Natural killer cell (primary cell): ENCODE measurements at regions of chr4 and their contacts with region 1.

Region 1: DNA sequence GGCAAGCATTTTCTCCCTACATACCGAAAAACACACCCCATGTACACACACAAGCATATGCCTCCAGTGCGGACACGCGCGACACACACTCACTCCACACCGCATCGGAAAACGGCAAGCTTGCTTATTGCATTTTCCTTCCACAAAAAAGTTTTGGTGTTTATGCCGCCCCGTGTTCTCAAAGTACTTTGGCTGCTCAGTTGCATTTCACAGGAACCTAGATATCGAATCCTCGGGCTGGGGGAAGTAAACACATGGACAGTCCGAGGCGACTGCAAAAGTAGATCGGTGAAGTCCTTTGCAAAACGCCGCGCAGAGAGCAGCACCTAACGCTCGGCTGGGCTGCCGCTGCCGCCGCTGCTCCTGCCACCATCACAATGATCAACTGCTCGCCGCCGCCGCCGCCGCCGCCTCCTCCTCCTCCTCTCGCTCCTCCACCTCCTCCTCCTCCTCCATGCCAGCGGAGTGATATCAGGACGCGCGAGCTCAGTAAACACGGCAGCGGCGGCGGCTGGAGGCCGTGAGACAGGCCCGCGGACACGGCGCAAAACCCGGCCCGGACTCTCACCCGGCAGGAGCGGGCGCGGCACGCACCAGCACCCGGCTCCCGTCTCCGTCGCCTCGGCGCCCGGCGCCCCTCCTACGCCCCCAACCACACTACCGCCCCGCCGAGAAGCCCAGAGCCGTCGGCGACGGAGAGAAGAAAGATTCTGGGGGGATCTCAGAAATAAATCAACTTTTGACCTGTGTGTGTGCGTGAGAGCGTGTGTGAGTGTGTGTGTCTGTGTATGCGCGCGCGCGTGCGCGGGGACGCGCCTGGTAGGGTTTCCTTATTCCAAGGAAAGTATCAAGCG is at the start of gene MAML3:
- DNase-seq: peak; percentile 79 to 86
- ATAC-seq: peak; percentile 64 to 70 (median 64)
- H3K4me3 ChIP-seq: peak within 1 kb of the TSS; percentile 79
- H3K4me3 Mint-ChIP-seq: peak within 1 kb of the TSS; percentile 93
- H3K27ac ChIP-seq: peak within 1 kb of the TSS; percentile 59
- H3K27ac Mint-ChIP-seq: peak within 1 kb of the TSS; percentile 26 to 85
- H3K4me1 ChIP-seq: peaks cover 37% of the 10 kb centered on the region
- H3K4me1 Mint-ChIP-seq: peaks cover 17 to 40% of the 10 kb centered on the region in 2 donors
- H3K27me3 ChIP-seq: no peaks in the 10 kb centered on the region
- H3K27me3 Mint-ChIP-seq: peaks cover 7 to 15% of the 10 kb centered on the region in 2 donors
- CTCF ChIP-seq: no peak
- total RNA-seq, gene MAML3: 1.7 to 5.6 (median 2.8) TPM

Region 2: DNA sequence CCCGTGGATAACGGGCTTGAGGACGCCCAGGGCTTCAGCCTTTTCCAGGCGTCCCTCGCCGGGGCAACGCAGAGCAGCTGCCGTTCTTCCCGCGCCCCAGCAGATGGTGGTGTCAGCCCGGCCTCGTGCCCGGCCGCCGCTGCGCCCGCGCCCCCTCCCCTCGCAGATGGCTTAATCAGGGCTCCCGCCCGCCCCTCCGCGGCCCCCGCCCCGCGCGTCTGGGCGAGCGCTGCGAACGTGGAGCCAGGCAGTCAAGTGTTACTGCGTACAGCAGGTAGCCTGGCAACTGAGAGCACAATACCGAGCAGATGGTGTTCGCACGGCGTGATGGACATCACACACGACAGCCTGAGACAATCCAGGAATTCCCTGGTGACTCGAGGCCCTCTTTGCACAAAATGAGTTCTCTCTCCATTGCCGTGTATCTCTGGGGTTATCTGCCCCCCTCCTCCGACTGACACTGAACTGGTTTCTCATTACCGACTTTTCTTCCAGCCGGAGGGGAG is 419.0 kb before region 1 on chr4:
- intact Hi-C with region 1: loop called (anchors 5 kb)
- DNase-seq: peak; percentile 61 to 63
- ATAC-seq: peak; percentile 87
- H3K4me3 ChIP-seq: peak overlapping the region; percentile 23
- H3K4me3 Mint-ChIP-seq: peak overlapping the region; percentile 81
- H3K27ac ChIP-seq: no peak overlapping the region
- H3K27ac Mint-ChIP-seq: peak overlapping the region in 1 of 2 donors; percentile 43
- H3K4me1 ChIP-seq: peaks cover 14% of the 10 kb centered on the region
- H3K4me1 Mint-ChIP-seq: peaks cover 9 to 11% of the 10 kb centered on the region in 2 donors
- H3K27me3 ChIP-seq: no peaks in the 10 kb centered on the region
- H3K27me3 Mint-ChIP-seq: peaks cover 11 to 28% of the 10 kb centered on the region in 2 donors
- CTCF ChIP-seq: peak; percentile 62

Region 3: DNA sequence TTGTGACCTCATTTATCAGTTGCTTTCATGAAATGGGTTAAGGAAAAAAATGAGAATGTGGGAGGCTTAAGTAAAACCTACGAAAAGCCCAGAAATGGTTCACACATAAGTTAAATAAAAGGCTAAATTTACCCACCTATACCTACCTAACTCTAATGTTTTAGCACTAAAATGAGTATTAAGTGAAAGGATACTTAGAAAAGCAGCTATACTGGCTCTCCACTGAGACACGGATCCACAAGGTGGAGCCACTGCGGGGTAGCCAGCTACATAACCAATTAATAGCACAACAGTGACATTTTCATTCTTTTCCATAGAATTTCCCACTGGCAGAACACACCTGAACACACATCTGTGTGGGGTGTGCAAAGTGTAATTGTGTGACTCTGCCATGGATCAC is 101.9 kb before region 1 on chr4:
- intact Hi-C with region 1: loop called (anchors 2 kb)
- DNase-seq: peak in 1 of 2 donors; percentile 60
- ATAC-seq: no peak
- H3K4me3 ChIP-seq: no peak overlapping the region
- H3K4me3 Mint-ChIP-seq: no peak overlapping the region
- H3K27ac ChIP-seq: no peak overlapping the region
- H3K27ac Mint-ChIP-seq: no peak overlapping the region
- H3K4me1 ChIP-seq: peaks cover 25% of the 10 kb centered on the region
- H3K4me1 Mint-ChIP-seq: peaks cover 24 to 32% of the 10 kb centered on the region in 2 donors
- H3K27me3 ChIP-seq: peaks cover 5% of the 10 kb centered on the region
- H3K27me3 Mint-ChIP-seq: peaks cover 40 to 68% of the 10 kb centered on the region in 2 donors
- CTCF ChIP-seq: no peak

Region 4: GRCh38 chr4:140095694-140096482 is 58.1 kb before region 1 on chr4:
- intact Hi-C with region 1: loop called (anchors 5 kb)
- DNase-seq: peak in 1 of 2 donors; percentile 88
- ATAC-seq: peak; percentile 39 to 65 (median 57)
- H3K4me3 ChIP-seq: peak overlapping the region; percentile 6
- H3K4me3 Mint-ChIP-seq: peak overlapping the region; percentile 1
- H3K27ac ChIP-seq: peak overlapping the region; percentile 64
- H3K27ac Mint-ChIP-seq: peak overlapping the region; percentile 34 to 85
- H3K4me1 ChIP-seq: peaks cover 45% of the 10 kb centered on the region
- H3K4me1 Mint-ChIP-seq: peaks cover 34% of the 10 kb centered on the region in 2 donors
- H3K27me3 ChIP-seq: no peaks in the 10 kb centered on the region
- H3K27me3 Mint-ChIP-seq: peaks cover 34 to 43% of the 10 kb centered on the region in 2 donors
- CTCF ChIP-seq: no peak

Region 5: DNA sequence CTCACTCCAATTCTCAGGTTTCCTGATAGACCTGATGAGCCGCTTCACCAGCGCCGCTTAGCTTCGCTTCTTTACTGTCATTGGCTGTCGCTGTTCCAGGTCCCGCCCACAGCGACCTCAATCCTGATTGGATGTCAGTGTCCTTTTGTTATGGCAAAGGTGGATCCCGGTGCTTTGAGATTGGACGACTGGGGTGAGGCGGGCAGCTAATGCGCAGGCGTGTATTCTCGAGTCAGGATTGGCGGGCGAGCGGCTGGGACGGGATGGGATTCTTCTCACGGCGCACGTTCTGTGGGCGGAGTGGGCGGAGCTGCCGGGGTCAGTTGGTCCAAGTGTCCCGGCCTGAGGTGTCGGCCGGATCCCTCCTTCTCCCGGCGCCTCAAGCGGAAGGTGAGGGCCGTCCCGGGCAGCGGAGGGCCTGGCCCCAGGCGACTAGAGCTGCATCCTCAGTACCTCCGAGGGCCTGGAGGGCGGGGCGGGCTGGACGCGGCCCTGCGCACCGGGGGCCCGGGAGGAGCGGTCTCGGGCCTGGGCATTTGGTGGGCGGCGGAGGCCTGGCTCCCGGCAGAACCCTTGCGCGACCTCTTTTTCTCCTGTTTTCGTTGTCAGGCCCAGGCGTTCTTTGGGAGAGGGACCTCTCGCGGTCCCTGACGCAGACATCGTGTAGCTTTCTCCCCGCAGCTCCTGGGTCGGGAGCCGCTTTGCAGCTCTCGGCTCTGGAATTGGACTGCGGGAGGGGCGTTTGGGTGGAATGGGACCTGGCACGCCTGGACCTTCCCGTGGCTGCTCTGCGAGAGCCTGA is 219.6 kb after region 1 on chr4 and contains the start of gene SCOC:
- intact Hi-C with region 1: loop called (anchors 5 kb)
- DNase-seq: peak; percentile 92 to 98
- ATAC-seq: peak; percentile 93 to 98 (median 94)
- H3K4me3 ChIP-seq: peak within 1 kb of the TSS; percentile 76
- H3K4me3 Mint-ChIP-seq: peak within 1 kb of the TSS; percentile 83
- H3K27ac ChIP-seq: peak within 1 kb of the TSS; percentile 75
- H3K27ac Mint-ChIP-seq: no peak within 1 kb of the TSS
- H3K4me1 ChIP-seq: peaks cover 7% of the 10 kb centered on the region
- H3K4me1 Mint-ChIP-seq: peaks cover 29 to 36% of the 10 kb centered on the region in 2 donors
- H3K27me3 ChIP-seq: no peaks in the 10 kb centered on the region
- H3K27me3 Mint-ChIP-seq: no peaks in the 10 kb centered on the region
- CTCF ChIP-seq: peak; percentile 3
- total RNA-seq, gene SCOC: 8.6 to 10.3 (median 9.4) TPM